ENCODE measurements at regions of chr10 and their contacts with region 1.

Region 1: GRCh38 chr10:97759158-97759887 is 12.5 kb downstream of the SFRP5 start:
- DNase-seq: peak; percentile 79
- ATAC-seq: peak; percentile 94
- H3K4me3 ChIP-seq: no peak overlapping the region
- H3K27ac ChIP-seq: peak overlapping the region; percentile 18
- H3K4me1 ChIP-seq: peaks cover 40% of the 10 kb centered on the region
- H3K27me3 ChIP-seq: no peaks in the 10 kb centered on the region
- CTCF ChIP-seq: peak; percentile 99
- EP300 ChIP-seq: no peak
- POLR2A ChIP-seq: no peak
- RAD21 ChIP-seq: peak; percentile 96

Region 2: GRCh38 chr10:97774811-97775294 is 15.5 kb after region 1 on chr10:
- CTCF ChIA-PET with region 1: interaction called, 3 read pairs
- POLR2A ChIA-PET with region 1: interaction called, 6 read pairs
- in situ Hi-C with region 1: no loop called
- intact Hi-C with region 1: loop called (anchors 1 kb)
- DNase-seq: peak; percentile 84
- ATAC-seq: peak; percentile 89
- H3K4me3 ChIP-seq: peak overlapping the region in 2 of 3 experiments; percentile 39 to 66; a peak in 4 of 6 replicates
- H3K27ac ChIP-seq: no peak overlapping the region
- H3K4me1 ChIP-seq: peaks cover 59% of the 10 kb centered on the region
- H3K27me3 ChIP-seq: peaks cover 6 to 28% of the 10 kb centered on the region in 2 experiments
- CTCF ChIP-seq: peak; percentile 29; the same call in 1 of the 2 replicates
- EP300 ChIP-seq: no peak
- POLR2A ChIP-seq: no peak
- RAD21 ChIP-seq: no peak

Region 3: GRCh38 chr10:97869091-97870042 is 110.0 kb after region 1 on chr10:
- CTCF ChIA-PET with region 1: interaction called, 24 read pairs
- POLR2A ChIA-PET with region 1: interaction called, 4 read pairs
- in situ Hi-C with region 1: loop called (anchors 5 kb)
- intact Hi-C with region 1: no loop called
- DNase-seq: peak; percentile 79
- ATAC-seq: peak; percentile 99
- H3K4me3 ChIP-seq: peak overlapping the region in 1 of 3 experiments; percentile 37; a peak in 1 of 6 replicates
- H3K27ac ChIP-seq: no peak overlapping the region
- H3K4me1 ChIP-seq: peaks cover 14% of the 10 kb centered on the region
- H3K27me3 ChIP-seq: peaks cover 11 to 79% of the 10 kb centered on the region in 2 experiments
- CTCF ChIP-seq: peak; percentile 92
- EP300 ChIP-seq: no peak
- POLR2A ChIP-seq: no peak
- RAD21 ChIP-seq: peak; percentile 94